ENCODE measurements at regions of chr1 and their contacts with region 1.

Region 1: GRCh38 chr1:200620273-200621131 is at the start of gene KIF14:
- DNase-seq: peak; percentile 97
- ATAC-seq: peak; percentile 94
- H3K4me3 Mint-ChIP-seq: peak within 1 kb of the TSS; percentile 86
- H3K27ac Mint-ChIP-seq: peak within 1 kb of the TSS; percentile 85
- H3K4me1 Mint-ChIP-seq: peaks cover 21% of the 10 kb centered on the region
- H3K27me3 Mint-ChIP-seq: peaks cover 2% of the 10 kb centered on the region
- CTCF ChIP-seq: no peak
- total RNA-seq, gene KIF14: 13.7 to 13.9 TPM

Region 2: GRCh38 chr1:200558866-200559459 is 61.5 kb before region 1 on chr1:
- CTCF ChIA-PET with region 1: interaction called, 17 read pairs
- POLR2A ChIA-PET with region 1: no interaction called
- intact Hi-C with region 1: no loop called
- DNase-seq: peak; percentile 42
- ATAC-seq: peak; percentile 49
- H3K4me3 Mint-ChIP-seq: no peak overlapping the region
- H3K27ac Mint-ChIP-seq: no peak overlapping the region
- H3K4me1 Mint-ChIP-seq: peaks cover 3% of the 10 kb centered on the region
- H3K27me3 Mint-ChIP-seq: no peaks in the 10 kb centered on the region
- CTCF ChIP-seq: peak; percentile 67

Region 3: GRCh38 chr1:200634261-200635122 is 14.0 kb after region 1 on chr1:
- CTCF ChIA-PET with region 1: interaction called, 18 read pairs
- POLR2A ChIA-PET with region 1: no interaction called
- intact Hi-C with region 1: no loop called
- DNase-seq: no peak
- ATAC-seq: no peak
- H3K4me3 Mint-ChIP-seq: no peak overlapping the region
- H3K27ac Mint-ChIP-seq: no peak overlapping the region
- H3K4me1 Mint-ChIP-seq: no peaks in the 10 kb centered on the region
- H3K27me3 Mint-ChIP-seq: no peaks in the 10 kb centered on the region
- CTCF ChIP-seq: no peak

Region 4: GRCh38 chr1:200669314-200670241 is 49.1 kb after region 1 on chr1 and contains the start of gene DDX59:
- CTCF ChIA-PET with region 1: interaction called, 38 read pairs
- POLR2A ChIA-PET with region 1: interaction called, 9 read pairs
- intact Hi-C with region 1: loop called (anchors 2 kb)
- DNase-seq: peak; percentile 95
- ATAC-seq: peak; percentile 85
- H3K4me3 Mint-ChIP-seq: peak within 1 kb of the TSS; percentile 94
- H3K27ac Mint-ChIP-seq: peak within 1 kb of the TSS; percentile 94
- H3K4me1 Mint-ChIP-seq: peaks cover 39% of the 10 kb centered on the region
- H3K27me3 Mint-ChIP-seq: no peaks in the 10 kb centered on the region
- CTCF ChIP-seq: no peak
- total RNA-seq, gene DDX59: 22.5 to 23.8 TPM

Region 5: DNA sequence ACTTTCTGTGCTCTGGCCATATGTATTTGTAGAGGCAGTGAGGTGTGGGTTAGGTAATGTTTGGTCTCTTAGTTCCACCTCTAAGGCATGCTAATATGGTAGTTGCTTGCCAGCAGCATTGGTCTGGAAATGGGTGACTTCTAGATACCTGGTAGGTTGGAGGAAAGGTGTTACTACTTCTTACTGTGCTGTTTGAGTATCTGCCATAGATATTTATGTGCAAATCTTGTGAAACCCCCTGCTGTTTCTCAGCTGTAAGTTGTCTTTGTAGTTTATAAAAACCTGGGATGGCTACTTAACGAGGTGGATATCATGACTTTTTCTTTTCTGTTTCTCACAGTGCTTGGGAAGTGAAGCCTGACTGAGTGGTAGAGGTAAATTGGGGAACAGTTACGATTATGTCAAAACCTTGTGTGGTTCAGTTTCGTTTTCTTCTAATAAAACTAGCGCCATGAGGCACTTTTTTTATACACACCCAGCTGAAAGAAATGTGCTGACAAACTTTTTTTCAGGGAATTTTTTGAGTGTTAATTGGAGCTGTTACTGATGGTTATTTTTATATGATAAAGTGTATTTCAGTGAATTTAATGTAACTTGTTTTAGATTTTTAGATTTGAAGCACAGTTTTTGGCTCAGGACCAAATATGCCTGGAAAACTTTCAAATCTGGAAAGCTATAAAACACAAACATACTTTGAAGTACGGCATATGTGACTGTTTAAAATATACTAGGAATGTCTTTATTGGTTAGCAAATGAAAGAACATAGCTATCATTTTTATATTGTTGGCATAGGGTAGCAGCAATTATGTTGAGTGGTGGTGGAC is 160.3 kb after region 1 on chr1:
- CTCF ChIA-PET with region 1: interaction called, 10 read pairs
- POLR2A ChIA-PET with region 1: no interaction called
- intact Hi-C with region 1: no loop called
- DNase-seq: no peak
- ATAC-seq: no peak
- H3K4me3 Mint-ChIP-seq: no peak overlapping the region
- H3K27ac Mint-ChIP-seq: no peak overlapping the region
- H3K4me1 Mint-ChIP-seq: peaks cover 2% of the 10 kb centered on the region
- H3K27me3 Mint-ChIP-seq: no peaks in the 10 kb centered on the region
- CTCF ChIP-seq: no peak

Region 6: GRCh38 chr1:200802865-200803512 is 182.5 kb after region 1 on chr1:
- CTCF ChIA-PET with region 1: interaction called, 80 read pairs
- POLR2A ChIA-PET with region 1: no interaction called
- intact Hi-C with region 1: loop called (anchors 1 kb)
- DNase-seq: peak; percentile 87
- ATAC-seq: peak; percentile 83
- H3K4me3 Mint-ChIP-seq: no peak overlapping the region
- H3K27ac Mint-ChIP-seq: no peak overlapping the region
- H3K4me1 Mint-ChIP-seq: no peaks in the 10 kb centered on the region
- H3K27me3 Mint-ChIP-seq: no peaks in the 10 kb centered on the region
- CTCF ChIP-seq: peak; percentile 91

Region 7: DNA sequence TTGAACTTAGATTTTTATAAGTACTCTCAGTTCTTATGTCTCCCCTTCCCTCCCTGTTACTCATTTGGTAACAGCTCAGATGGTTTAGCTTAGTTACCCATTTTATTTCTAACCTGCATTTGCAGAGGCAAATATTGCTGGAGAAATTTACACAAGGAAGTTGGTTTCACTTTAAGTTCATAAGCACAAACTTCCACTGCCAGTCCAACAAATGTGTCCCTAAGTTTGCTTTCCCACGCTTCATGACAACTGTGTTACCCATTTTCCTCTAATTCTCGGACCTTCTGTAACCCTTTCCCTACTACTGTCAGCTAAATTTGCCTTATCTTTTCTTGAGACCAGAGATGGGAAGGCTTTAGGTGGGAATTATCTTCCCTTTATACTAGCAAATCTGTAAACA is 188.3 kb after region 1 on chr1:
- CTCF ChIA-PET with region 1: interaction called, 80 read pairs
- POLR2A ChIA-PET with region 1: no interaction called
- intact Hi-C with region 1: no loop called
- DNase-seq: no peak
- ATAC-seq: no peak
- H3K4me3 Mint-ChIP-seq: no peak overlapping the region
- H3K27ac Mint-ChIP-seq: no peak overlapping the region
- H3K4me1 Mint-ChIP-seq: no peaks in the 10 kb centered on the region
- H3K27me3 Mint-ChIP-seq: no peaks in the 10 kb centered on the region
- CTCF ChIP-seq: no peak